ENCODE measurements at regions of chr10 and their contacts with region 1.

Region 1: DNA sequence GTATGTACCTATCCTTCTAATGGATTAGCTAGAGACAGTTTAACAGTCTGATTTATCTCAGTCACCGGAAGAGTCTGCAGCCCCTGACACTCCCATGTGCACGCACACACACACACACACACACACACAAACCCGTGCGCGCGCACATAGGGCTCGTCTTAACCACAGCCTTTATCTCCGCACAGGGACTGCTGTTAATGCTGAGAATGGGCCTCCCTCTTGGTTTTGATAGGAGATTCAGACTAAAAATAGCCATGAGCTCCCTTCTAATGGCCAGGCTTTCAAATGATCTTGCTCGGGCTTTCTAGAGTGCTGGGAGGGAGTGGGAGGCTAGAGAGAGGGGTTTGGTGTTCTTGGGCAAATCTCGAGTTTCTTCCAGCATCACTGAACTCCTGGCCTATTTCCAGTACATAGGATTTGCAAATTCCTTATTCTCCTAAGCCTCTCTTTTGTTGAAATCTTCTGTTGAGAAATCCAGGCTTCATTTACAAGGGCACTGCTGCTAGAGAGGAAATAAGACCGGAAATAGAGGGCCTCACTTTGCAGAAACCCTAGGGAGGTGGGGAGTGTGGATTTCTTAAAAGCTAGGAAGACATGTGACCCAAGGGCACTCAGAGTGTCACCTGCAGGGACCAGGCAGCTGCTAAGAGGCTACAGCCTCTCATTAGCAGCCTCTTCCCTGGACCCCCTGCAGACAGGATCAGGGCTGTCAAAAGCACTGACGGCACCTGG is 2.4 kb downstream of the TMEM72 start:
- DNase-seq: no peak
- H3K4me3 ChIP-seq: no peak overlapping the region
- H3K27ac ChIP-seq: no peak overlapping the region
- H3K4me1 ChIP-seq: no peaks in the 10 kb centered on the region
- H3K27me3 ChIP-seq: peaks cover 2% of the 10 kb centered on the region
- CTCF ChIP-seq: no peak

Region 2: DNA sequence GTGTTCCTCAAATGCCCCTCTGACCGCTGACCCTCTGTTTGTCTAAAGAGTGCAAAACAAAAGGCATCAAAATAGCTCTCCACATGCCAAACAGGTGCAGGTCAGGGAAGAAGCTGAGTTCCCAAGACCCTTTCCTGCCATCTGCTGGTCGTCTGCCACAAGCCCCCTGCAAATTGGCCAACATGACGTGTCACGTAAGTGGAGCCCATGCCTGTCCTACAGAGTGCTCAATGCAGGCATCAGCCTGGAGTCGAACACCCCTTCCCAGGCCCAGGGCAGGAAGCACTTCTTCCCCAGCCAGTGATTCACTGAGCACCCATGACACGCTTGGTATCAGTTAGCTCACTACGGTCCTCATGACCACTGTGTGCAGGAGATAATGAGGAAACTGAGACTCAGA is 11.7 kb after region 1 on chr10:
- CTCF ChIA-PET with region 1: no interaction called
- dilution Hi-C with region 1: no loop called
- in situ Hi-C with region 1: no loop called
- intact Hi-C with region 1: no loop called
- DNase-seq: no peak
- H3K4me3 ChIP-seq: no peak overlapping the region
- H3K27ac ChIP-seq: no peak overlapping the region
- H3K4me1 ChIP-seq: no peaks in the 10 kb centered on the region
- H3K27me3 ChIP-seq: no peaks in the 10 kb centered on the region
- CTCF ChIP-seq: no peak

Region 3: GRCh38 chr10:44965651-44966097 is 52.2 kb after region 1 on chr10:
- CTCF ChIA-PET with region 1: no interaction called
- dilution Hi-C with region 1: loop called (anchors 5 kb)
- in situ Hi-C with region 1: no loop called
- intact Hi-C with region 1: no loop called
- DNase-seq: no peak
- H3K4me3 ChIP-seq: no peak overlapping the region
- H3K27ac ChIP-seq: no peak overlapping the region
- H3K4me1 ChIP-seq: peaks cover 6% of the 10 kb centered on the region
- H3K27me3 ChIP-seq: no peaks in the 10 kb centered on the region
- CTCF ChIP-seq: no peak

Region 4: GRCh38 chr10:45464958-45465567 is 551.5 kb after region 1 on chr10:
- CTCF ChIA-PET with region 1: no interaction called
- dilution Hi-C with region 1: no loop called
- in situ Hi-C with region 1: no loop called
- intact Hi-C with region 1: no loop called
- DNase-seq: peak; percentile 47
- H3K4me3 ChIP-seq: no peak overlapping the region
- H3K27ac ChIP-seq: no peak overlapping the region
- H3K4me1 ChIP-seq: no peaks in the 10 kb centered on the region
- H3K27me3 ChIP-seq: no peaks in the 10 kb centered on the region
- CTCF ChIP-seq: peak; percentile 95 to 97

Measured in mammary epithelial cell (primary cell).